ENCODE measurements at regions of chr7 and their contacts with region 1.

Region 1: GRCh38 chr7:24921362-24921679 is 58.7 kb downstream of the OSBPL3 start:
- DNase-seq: peak; percentile 8
- ATAC-seq: no peak; the same call in 1 of the 2 replicates
- H3K4me3 ChIP-seq: no peak overlapping the region
- H3K27ac ChIP-seq: peak overlapping the region; percentile 80
- H3K4me1 ChIP-seq: peaks cover 33% of the 10 kb centered on the region
- H3K27me3 ChIP-seq: no peaks in the 10 kb centered on the region
- CTCF ChIP-seq: no peak

Region 2: DNA sequence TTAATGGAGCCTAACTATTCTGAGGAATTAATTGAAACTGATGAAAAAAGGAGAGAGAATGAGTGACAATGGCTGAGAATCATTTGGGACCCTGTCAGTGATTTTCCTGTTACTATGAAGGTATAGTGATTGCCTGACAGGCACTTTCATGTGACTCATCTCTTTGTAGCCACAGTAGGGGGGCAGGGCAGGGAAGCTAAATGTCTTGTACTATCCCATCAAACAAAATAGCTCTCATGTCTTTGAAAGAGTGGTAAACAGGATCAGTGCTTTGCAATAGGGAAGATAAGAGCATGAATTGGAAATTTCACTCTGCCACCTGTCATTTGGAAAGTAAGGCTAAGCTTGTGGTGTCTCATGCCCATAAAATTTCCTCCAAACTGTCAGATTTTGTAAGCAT is 69.5 kb before region 1 on chr7:
- CTCF ChIA-PET with region 1: no interaction called
- POLR2A ChIA-PET with region 1: no interaction called
- intact Hi-C with region 1: no loop called
- DNase-seq: peak; percentile 56
- ATAC-seq: peak; percentile 95
- H3K4me3 ChIP-seq: no peak overlapping the region
- H3K27ac ChIP-seq: no peak overlapping the region
- H3K4me1 ChIP-seq: peaks cover 11% of the 10 kb centered on the region
- H3K27me3 ChIP-seq: no peaks in the 10 kb centered on the region
- CTCF ChIP-seq: no peak

Region 3: DNA sequence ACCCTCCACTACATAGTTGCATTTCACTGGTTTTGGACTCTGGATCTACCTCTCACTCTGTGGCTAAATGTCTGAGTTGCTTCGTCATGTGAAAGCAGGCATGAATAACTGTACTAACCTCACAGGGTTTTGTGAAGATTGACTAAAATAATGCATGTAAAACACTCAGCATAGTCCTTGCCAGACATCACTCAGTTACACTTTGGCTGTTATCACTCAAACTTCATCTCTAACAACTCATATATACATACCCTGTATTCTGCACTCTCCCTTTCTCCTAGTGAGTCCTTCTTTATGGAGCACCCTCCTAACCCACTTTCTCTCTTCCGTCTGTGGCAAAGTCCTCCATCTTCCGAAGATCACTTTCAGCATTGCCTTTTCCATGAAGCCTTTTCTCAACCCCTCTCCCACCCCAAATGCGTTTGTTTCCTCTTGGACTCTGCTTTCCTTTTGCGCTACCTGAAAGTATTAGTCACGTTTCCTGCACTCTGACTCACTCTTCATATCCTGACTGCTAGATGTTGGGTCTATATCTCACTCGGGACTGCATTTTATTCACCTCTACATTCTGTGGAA is 13.9 kb before region 1 on chr7:
- CTCF ChIA-PET with region 1: no interaction called
- POLR2A ChIA-PET with region 1: no interaction called
- intact Hi-C with region 1: loop called (anchors 2 kb)
- DNase-seq: peak; percentile 81
- ATAC-seq: peak; percentile 92
- H3K4me3 ChIP-seq: peak overlapping the region; percentile 43; the same call in 1 of the 2 replicates
- H3K27ac ChIP-seq: peak overlapping the region; percentile 80
- H3K4me1 ChIP-seq: peaks cover 52% of the 10 kb centered on the region
- H3K27me3 ChIP-seq: no peaks in the 10 kb centered on the region
- CTCF ChIP-seq: no peak

Region 4: GRCh38 chr7:24948739-24949138 is 27.4 kb after region 1 on chr7:
- CTCF ChIA-PET with region 1: no interaction called
- POLR2A ChIA-PET with region 1: no interaction called
- intact Hi-C with region 1: no loop called
- DNase-seq: no peak
- ATAC-seq: peak; percentile 23; the same call in 1 of the 2 replicates
- H3K4me3 ChIP-seq: no peak overlapping the region
- H3K27ac ChIP-seq: no peak overlapping the region
- H3K4me1 ChIP-seq: peaks cover 17% of the 10 kb centered on the region
- H3K27me3 ChIP-seq: no peaks in the 10 kb centered on the region
- CTCF ChIP-seq: no peak